ENCODE measurements at regions of chr11 and their contacts with region 1.

Region 1: GRCh38 chr11:76721755-76722677 is 51.5 kb upstream of the LRRC32 start:
- DNase-seq: peak; percentile 68
- ATAC-seq: peak; percentile 98
- H3K4me3 ChIP-seq: peak overlapping the region; percentile 13 to 27
- H3K27ac ChIP-seq: no peak overlapping the region
- H3K4me1 ChIP-seq: peaks cover 0 to 10% of the 10 kb centered on the region in 2 experiments; a peak in 2 of 4 replicates
- H3K27me3 ChIP-seq: peaks cover 41% of the 10 kb centered on the region
- CTCF ChIP-seq: peak; percentile 77 to 95 (median 88)
- POLR2A ChIP-seq: no peak
- RAD21 ChIP-seq: peak; percentile 72

Region 2: DNA sequence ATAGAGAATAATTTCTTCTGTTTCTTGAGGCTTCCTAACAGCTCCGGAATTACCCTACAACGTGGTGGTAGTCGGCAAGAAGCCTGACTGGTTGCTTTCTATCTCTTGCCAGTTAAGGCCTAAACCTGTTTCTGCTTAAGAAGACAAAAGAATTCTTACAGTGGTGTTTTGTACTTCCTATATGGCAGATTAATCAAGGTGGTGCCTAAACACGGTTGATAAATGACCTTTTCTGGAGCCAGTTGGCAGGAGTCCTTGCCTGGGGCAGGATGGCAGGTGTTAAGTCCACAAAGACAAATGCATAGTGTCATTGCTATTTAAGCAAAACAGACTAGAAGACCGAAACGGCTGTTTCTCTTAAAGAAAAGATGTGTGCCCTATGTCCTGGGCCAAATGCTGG is 331.0 kb before region 1 on chr11:
- CTCF ChIA-PET with region 1: no interaction called
- POLR2A ChIA-PET with region 1: no interaction called
- RAD21 ChIA-PET with region 1: no interaction called
- intact Hi-C with region 1: no loop called
- DNase-seq: no peak
- ATAC-seq: no peak
- H3K4me3 ChIP-seq: no peak overlapping the region
- H3K27ac ChIP-seq: no peak overlapping the region
- H3K4me1 ChIP-seq: no peaks in the 10 kb centered on the region
- H3K27me3 ChIP-seq: no peaks in the 10 kb centered on the region
- CTCF ChIP-seq: no peak
- POLR2A ChIP-seq: no peak
- RAD21 ChIP-seq: no peak

Region 3: GRCh38 chr11:76574406-76574805 is 147.6 kb before region 1 on chr11:
- CTCF ChIA-PET with region 1: no interaction called
- POLR2A ChIA-PET with region 1: no interaction called
- RAD21 ChIA-PET with region 1: no interaction called
- intact Hi-C with region 1: no loop called
- DNase-seq: no peak
- ATAC-seq: no peak
- H3K4me3 ChIP-seq: no peak overlapping the region
- H3K27ac ChIP-seq: no peak overlapping the region
- H3K4me1 ChIP-seq: peaks cover 11 to 19% of the 10 kb centered on the region in 2 experiments
- H3K27me3 ChIP-seq: no peaks in the 10 kb centered on the region
- CTCF ChIP-seq: no peak
- POLR2A ChIP-seq: no peak
- RAD21 ChIP-seq: no peak

Region 4: GRCh38 chr11:76698321-76699060 is 23.5 kb before region 1 on chr11:
- CTCF ChIA-PET with region 1: interaction called, 12 read pairs
- POLR2A ChIA-PET with region 1: no interaction called
- RAD21 ChIA-PET with region 1: no interaction called
- intact Hi-C with region 1: no loop called
- DNase-seq: peak; percentile 34
- ATAC-seq: 0 out of 2 replicates have a peak, but pooled peaks have one; percentile 7
- H3K4me3 ChIP-seq: no peak overlapping the region
- H3K27ac ChIP-seq: no peak overlapping the region
- H3K4me1 ChIP-seq: peaks cover 41 to 54% of the 10 kb centered on the region in 2 experiments
- H3K27me3 ChIP-seq: no peaks in the 10 kb centered on the region
- CTCF ChIP-seq: peak in 2 of 3 experiments; percentile 50 to 76; a peak in 4 of 6 replicates
- POLR2A ChIP-seq: no peak
- RAD21 ChIP-seq: peak; percentile 49; the same call in 1 of the 2 replicates